HepG2 (cell line): ENCODE measurements at regions of chr4 and their contacts with region 1.

Region 1: DNA sequence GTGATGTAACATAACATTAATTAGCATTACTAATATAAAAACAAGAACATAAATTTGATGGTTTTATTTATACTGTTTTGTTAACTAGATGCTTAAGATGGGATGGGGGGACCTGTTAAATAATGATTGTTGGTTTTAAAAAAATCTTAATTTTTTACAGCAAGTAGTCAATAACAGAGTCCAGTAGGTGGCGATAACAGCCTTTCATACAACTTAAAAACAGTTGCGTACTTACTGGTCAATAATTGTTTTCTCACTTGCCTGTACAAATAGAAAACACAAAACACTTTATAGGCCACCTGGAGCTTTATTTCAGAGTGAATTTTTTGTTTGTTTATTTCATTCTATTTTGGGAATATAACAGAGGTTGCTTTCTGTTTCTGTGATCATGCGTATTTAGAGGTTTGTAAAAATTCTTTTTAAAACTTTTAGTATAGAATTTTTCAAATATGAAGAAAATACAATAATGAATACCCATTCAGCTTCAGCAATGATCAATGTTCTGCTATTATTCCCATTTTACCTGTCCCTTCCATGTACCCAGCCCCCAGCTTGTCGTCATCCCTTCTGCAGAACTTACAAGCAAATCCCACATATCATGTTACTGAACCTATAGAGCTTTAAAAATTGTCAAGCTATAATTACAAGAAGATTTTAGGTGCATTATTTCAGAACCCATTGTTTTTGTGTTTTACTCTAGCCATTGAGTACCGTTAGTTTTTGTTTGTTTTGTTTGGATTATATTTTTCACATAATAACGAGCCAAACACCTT is 97.1 kb downstream of the MRPL1 start:
- DNase-seq: peak; percentile 63
- ATAC-seq: peak; percentile 57; the same call in 2 of the 3 replicates
- H3K4me3 ChIP-seq: no peak overlapping the region
- H3K27ac ChIP-seq: no peak overlapping the region
- H3K4me1 ChIP-seq: no peaks in the 10 kb centered on the region
- H3K27me3 ChIP-seq: no peaks in the 10 kb centered on the region
- CTCF ChIP-seq: peak; percentile 69
- EP300 ChIP-seq: no peak
- POLR2A ChIP-seq: no peak
- RAD21 ChIP-seq: peak; percentile 56

Region 2: GRCh38 chr4:77938560-77938959 is 21.2 kb before region 1 on chr4:
- CTCF ChIA-PET with region 1: no interaction called
- POLR2A ChIA-PET with region 1: no interaction called
- in situ Hi-C with region 1: no loop called
- intact Hi-C with region 1: no loop called
- DNase-seq: no peak
- ATAC-seq: no peak
- H3K4me3 ChIP-seq: no peak overlapping the region
- H3K27ac ChIP-seq: no peak overlapping the region
- H3K4me1 ChIP-seq: no peaks in the 10 kb centered on the region
- H3K27me3 ChIP-seq: no peaks in the 10 kb centered on the region
- CTCF ChIP-seq: no peak
- EP300 ChIP-seq: no peak
- POLR2A ChIP-seq: no peak
- RAD21 ChIP-seq: no peak

Region 3: GRCh38 chr4:77994194-77994721 is 34.5 kb after region 1 on chr4:
- CTCF ChIA-PET with region 1: no interaction called
- POLR2A ChIA-PET with region 1: no interaction called
- in situ Hi-C with region 1: no loop called
- intact Hi-C with region 1: loop called (anchors 2 kb)
- DNase-seq: peak; percentile 84
- ATAC-seq: peak; percentile 95
- H3K4me3 ChIP-seq: peak overlapping the region in 1 of 3 experiments; percentile 13; a peak in 1 of 6 replicates
- H3K27ac ChIP-seq: no peak overlapping the region
- H3K4me1 ChIP-seq: peaks cover 60% of the 10 kb centered on the region
- H3K27me3 ChIP-seq: no peaks in the 10 kb centered on the region
- CTCF ChIP-seq: peak; percentile 83
- EP300 ChIP-seq: no peak
- POLR2A ChIP-seq: no peak
- RAD21 ChIP-seq: peak; percentile 54; the same call in 1 of the 2 replicates

Region 4: DNA sequence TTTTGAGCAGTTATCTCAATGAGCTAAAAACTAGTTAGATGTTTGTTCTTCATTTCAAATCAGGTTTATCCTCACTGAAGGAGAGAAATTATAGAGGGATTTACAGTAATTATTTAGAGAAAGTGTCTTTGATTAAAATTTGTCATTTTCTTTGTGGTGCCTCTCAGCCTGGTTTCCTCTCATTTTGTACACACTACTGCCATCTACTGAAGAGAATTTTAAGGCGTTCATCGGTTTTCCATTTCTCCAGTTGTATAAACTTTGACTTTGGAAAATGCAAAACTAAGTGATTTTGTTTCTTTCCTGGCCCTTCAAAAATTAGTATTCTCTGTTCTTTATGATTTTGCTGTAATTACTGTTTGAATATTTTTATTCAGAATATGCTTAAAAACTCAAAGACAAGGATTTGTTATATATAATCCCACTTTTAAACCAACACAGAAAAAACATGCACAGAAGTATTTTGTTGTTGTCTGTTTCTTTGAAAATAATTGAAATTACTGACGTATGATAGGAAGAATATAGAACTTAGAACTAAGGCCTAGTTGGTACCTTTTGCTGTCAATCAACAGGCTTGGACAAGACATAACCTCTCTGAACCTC is 557.4 kb after region 1 on chr4:
- CTCF ChIA-PET with region 1: interaction called, 6 read pairs
- POLR2A ChIA-PET with region 1: no interaction called
- in situ Hi-C with region 1: loop called (anchors 10 kb)
- intact Hi-C with region 1: loop called (anchors 1 kb)
- DNase-seq: peak; percentile 11
- ATAC-seq: no peak
- H3K4me3 ChIP-seq: no peak overlapping the region
- H3K27ac ChIP-seq: no peak overlapping the region
- H3K4me1 ChIP-seq: peaks cover 23% of the 10 kb centered on the region
- H3K27me3 ChIP-seq: no peaks in the 10 kb centered on the region
- CTCF ChIP-seq: peak; percentile 65
- EP300 ChIP-seq: no peak
- POLR2A ChIP-seq: no peak
- RAD21 ChIP-seq: peak; percentile 34; the same call in 1 of the 2 replicates

Region 5: DNA sequence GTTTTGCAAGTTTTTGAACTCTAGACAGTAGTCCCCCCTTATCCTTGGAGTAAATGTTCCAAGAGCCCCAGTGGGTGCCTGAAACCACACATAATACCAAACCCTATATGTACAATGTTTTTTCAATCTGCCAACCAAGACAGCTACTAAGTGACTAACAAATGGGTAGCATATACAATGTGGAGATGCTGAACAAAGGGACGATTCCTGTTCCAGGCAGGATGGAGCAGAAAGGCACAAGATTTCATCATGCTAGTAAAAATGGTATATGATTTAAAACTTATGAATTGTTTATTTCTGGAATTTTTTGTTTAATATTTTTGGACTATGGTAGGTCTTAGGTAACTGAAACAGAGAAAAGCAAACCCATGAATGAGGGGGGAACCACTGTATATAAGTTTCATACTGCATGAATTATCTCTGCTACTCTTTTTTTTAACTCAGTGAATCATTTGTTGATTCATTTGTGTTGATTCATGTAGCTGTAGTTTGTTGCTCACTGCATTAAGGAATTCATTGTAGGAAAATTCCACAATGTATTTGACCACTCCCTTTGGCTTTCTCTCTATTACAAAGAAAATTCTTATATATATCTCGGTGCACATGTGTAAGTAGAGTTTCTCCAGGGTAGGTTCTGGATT is 569.9 kb after region 1 on chr4:
- CTCF ChIA-PET with region 1: no interaction called
- POLR2A ChIA-PET with region 1: no interaction called
- in situ Hi-C with region 1: loop called (anchors 10 kb)
- intact Hi-C with region 1: no loop called
- DNase-seq: no peak
- ATAC-seq: no peak
- H3K4me3 ChIP-seq: no peak overlapping the region
- H3K27ac ChIP-seq: no peak overlapping the region
- H3K4me1 ChIP-seq: no peaks in the 10 kb centered on the region; the same call in 1 of the 2 replicates
- H3K27me3 ChIP-seq: no peaks in the 10 kb centered on the region
- CTCF ChIP-seq: no peak
- EP300 ChIP-seq: no peak
- POLR2A ChIP-seq: no peak
- RAD21 ChIP-seq: no peak

Region 6: GRCh38 chr4:78551479-78552351 is 592.0 kb after region 1 on chr4 and contains the start of gene ANXA3:
- CTCF ChIA-PET with region 1: no interaction called
- POLR2A ChIA-PET with region 1: no interaction called
- in situ Hi-C with region 1: no loop called
- intact Hi-C with region 1: no loop called
- DNase-seq: no peak
- ATAC-seq: peak; percentile 91
- H3K4me3 ChIP-seq: peak within 1 kb of the TSS; percentile 68 to 82 (median 70)
- H3K27ac ChIP-seq: no peak within 1 kb of the TSS
- H3K4me1 ChIP-seq: peaks cover 29% of the 10 kb centered on the region
- H3K27me3 ChIP-seq: peaks cover 0 to 13% of the 10 kb centered on the region in 2 experiments; a peak in 2 of 5 replicates
- CTCF ChIP-seq: no peak
- EP300 ChIP-seq: no peak
- POLR2A ChIP-seq: peak in 1 of 2 experiments; percentile 17; a peak in 1 of 4 replicates
- RAD21 ChIP-seq: no peak
- total RNA-seq, gene ANXA3: 6.5 and 8.2 TPM in 2 replicates